Activated T-helper 1 cell treated with anti-CD3 and anti-CD28 coated beads, Interleukin-12 subunit alpha, Interleukin-12 subunit beta, Interleukin-2, Interleukin-4 antibody, amounts not matched to agents 30 ng/mL and 10 ng/mL and 1 ng/mL, durations not matched to agents 14 hours and 24 hours and 36 hours (primary cell): ENCODE measurements at regions of chr22 and their contacts with region 1.

Region 1: GRCh38 chr22:42090596-42091454 is at the start of gene NDUFA6:
- DNase-seq: peak; percentile 99
- H3K4me3 Mint-ChIP-seq: peak within 1 kb of the TSS; percentile 98
- H3K27ac Mint-ChIP-seq: peak within 1 kb of the TSS; percentile 99
- H3K4me1 Mint-ChIP-seq: peaks cover 29% of the 10 kb centered on the region
- H3K27me3 Mint-ChIP-seq: no peaks in the 10 kb centered on the region
- total RNA-seq, gene NDUFA6: 81.6 and 85.8 TPM in 2 replicates

Region 2: GRCh38 chr22:41596776-41597634 is 493.8 kb before region 1 on chr22:
- intact Hi-C with region 1: no loop called
- DNase-seq: no peak
- H3K4me3 Mint-ChIP-seq: no peak overlapping the region
- H3K27ac Mint-ChIP-seq: no peak overlapping the region
- H3K4me1 Mint-ChIP-seq: peaks cover 20% of the 10 kb centered on the region
- H3K27me3 Mint-ChIP-seq: peaks cover 3% of the 10 kb centered on the region

Region 3: GRCh38 chr22:41697126-41697775 is 393.6 kb before region 1 on chr22:
- intact Hi-C with region 1: loop called (anchors 5 kb)
- DNase-seq: peak; percentile 81
- H3K4me3 Mint-ChIP-seq: peak overlapping the region; percentile 40
- H3K27ac Mint-ChIP-seq: peak overlapping the region; percentile 84
- H3K4me1 Mint-ChIP-seq: peaks cover 13% of the 10 kb centered on the region
- H3K27me3 Mint-ChIP-seq: no peaks in the 10 kb centered on the region

Region 4: DNA sequence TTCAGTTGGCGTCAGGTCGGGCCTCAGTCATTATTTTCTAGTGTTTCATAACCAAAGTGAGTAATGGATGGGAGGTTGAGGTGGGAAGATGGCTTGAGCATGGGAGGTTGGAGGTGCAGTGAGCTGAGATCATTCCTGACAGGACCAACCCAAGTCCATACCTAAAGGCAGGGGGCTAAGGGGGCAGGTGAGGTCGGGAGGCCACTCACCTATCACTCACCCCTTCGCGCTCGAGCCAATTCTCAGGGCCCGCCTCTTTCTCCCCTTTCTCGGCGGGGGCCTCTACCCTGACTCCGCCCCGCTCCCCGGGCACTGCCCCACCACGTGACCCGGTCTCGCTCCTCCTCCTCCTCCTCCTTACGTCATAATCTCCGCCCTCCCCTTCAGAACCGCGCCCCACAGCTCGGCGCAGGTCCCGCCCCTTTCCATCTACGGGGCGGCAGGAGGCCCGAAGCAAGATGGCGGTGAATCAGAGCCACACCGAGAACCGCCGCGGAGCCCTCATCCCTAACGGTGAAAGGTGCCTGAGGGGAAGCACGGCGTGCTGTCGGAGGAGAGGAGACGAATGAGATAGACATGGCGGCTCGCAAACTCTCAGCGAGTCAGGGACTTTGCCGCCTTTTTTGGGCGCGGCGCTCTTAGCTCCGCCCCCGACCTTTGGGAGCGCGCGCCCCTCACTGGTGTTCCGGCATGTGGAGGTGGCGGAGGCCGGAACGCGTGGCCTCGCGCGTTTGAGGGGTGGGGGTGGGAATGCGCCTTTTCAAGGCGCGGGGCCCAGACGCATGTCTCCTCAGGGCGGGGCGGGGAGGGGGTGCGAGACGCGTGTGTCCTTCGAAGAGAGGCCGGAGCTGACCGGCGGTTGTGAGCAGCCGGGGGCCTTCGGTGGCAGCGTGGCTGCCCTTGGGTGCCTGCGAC is 92.2 kb before region 1 on chr22 and contains the start of gene WBP2NL:
- intact Hi-C with region 1: loop called (anchors 1 kb)
- DNase-seq: peak; percentile 88
- H3K4me3 Mint-ChIP-seq: peak within 1 kb of the TSS; percentile 91
- H3K27ac Mint-ChIP-seq: peak within 1 kb of the TSS; percentile 95
- H3K4me1 Mint-ChIP-seq: peaks cover 40% of the 10 kb centered on the region
- H3K27me3 Mint-ChIP-seq: peaks cover 1% of the 10 kb centered on the region
- total RNA-seq, gene WBP2NL: 1.5 and 2.3 TPM in 2 replicates

Region 5: GRCh38 chr22:42116848-42117424 is 26.1 kb after region 1 on chr22:
- intact Hi-C with region 1: loop called (anchors 2 kb)
- DNase-seq: no peak
- H3K4me3 Mint-ChIP-seq: no peak overlapping the region
- H3K27ac Mint-ChIP-seq: peak overlapping the region; percentile 18
- H3K4me1 Mint-ChIP-seq: peaks cover 39% of the 10 kb centered on the region
- H3K27me3 Mint-ChIP-seq: peaks cover 2% of the 10 kb centered on the region

Region 6: DNA sequence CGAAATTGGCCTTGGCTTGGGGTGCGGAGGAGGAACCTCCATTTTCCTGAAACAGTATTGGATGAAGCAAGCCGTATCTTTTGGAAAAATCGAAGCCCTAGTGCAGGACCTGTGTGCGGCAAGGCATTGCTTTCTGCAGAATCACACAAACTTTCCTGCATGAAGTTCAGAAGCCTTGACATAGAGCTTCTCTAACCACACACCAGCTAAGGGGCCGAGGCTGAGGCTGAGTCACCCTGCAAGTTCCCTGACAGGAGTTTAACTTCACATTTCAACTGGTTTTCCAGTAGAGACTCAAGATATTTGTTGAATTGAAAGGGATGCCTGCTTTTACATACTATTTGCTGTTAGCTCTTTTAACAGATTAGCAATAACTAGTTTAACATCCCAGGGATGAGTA is 111.8 kb after region 1 on chr22:
- intact Hi-C with region 1: no loop called
- DNase-seq: peak; percentile 48
- H3K4me3 Mint-ChIP-seq: peak overlapping the region; percentile 79
- H3K27ac Mint-ChIP-seq: peak overlapping the region; percentile 77
- H3K4me1 Mint-ChIP-seq: peaks cover 39% of the 10 kb centered on the region
- H3K27me3 Mint-ChIP-seq: no peaks in the 10 kb centered on the region

Region 7: GRCh38 chr22:42313804-42314581 is 223.2 kb after region 1 on chr22:
- intact Hi-C with region 1: loop called (anchors 1 kb)
- DNase-seq: peak; percentile 28
- H3K4me3 Mint-ChIP-seq: no peak overlapping the region
- H3K27ac Mint-ChIP-seq: no peak overlapping the region
- H3K4me1 Mint-ChIP-seq: peaks cover 21% of the 10 kb centered on the region
- H3K27me3 Mint-ChIP-seq: no peaks in the 10 kb centered on the region

Region 8: GRCh38 chr22:42444077-42444904 is 353.5 kb after region 1 on chr22:
- intact Hi-C with region 1: loop called (anchors 1 kb)
- DNase-seq: peak; percentile 76
- H3K4me3 Mint-ChIP-seq: peak overlapping the region; percentile 68
- H3K27ac Mint-ChIP-seq: peak overlapping the region; percentile 78
- H3K4me1 Mint-ChIP-seq: peaks cover 35% of the 10 kb centered on the region
- H3K27me3 Mint-ChIP-seq: peaks cover 5% of the 10 kb centered on the region